CD4-positive, alpha-beta T cell (primary cell): ENCODE measurements at regions of chr2 and their contacts with region 1.

Region 1: GRCh38 chr2:226791487-226792081 is 8.0 kb downstream of the IRS1 start:
- DNase-seq: peak; percentile 83 to 96 (median 90)
- ATAC-seq: peak; percentile 95
- H3K4me3 ChIP-seq: peak overlapping the region; percentile 77
- H3K4me3 Mint-ChIP-seq: peak overlapping the region; percentile 97
- H3K27ac ChIP-seq: peak overlapping the region; percentile 88 to 91
- H3K27ac Mint-ChIP-seq: peak overlapping the region; percentile 97
- H3K4me1 ChIP-seq: peaks cover 35% of the 10 kb centered on the region
- H3K4me1 Mint-ChIP-seq: peaks cover 31% of the 10 kb centered on the region
- H3K27me3 ChIP-seq: no peaks in the 10 kb centered on the region
- H3K27me3 Mint-ChIP-seq: no peaks in the 10 kb centered on the region
- CTCF ChIP-seq: peak; percentile 40

Region 2: GRCh38 chr2:225282858-225283710 is 1508.5 kb before region 1 on chr2:
- CTCF ChIA-PET with region 1: no interaction called
- POLR2A ChIA-PET with region 1: no interaction called
- intact Hi-C with region 1: loop called in 1 of 2 experiments (anchors 10 kb)
- DNase-seq: peak in 6 of 14 experiments; percentile 2 to 51 (median 30)
- ATAC-seq: peak; percentile 43
- H3K4me3 ChIP-seq: no peak overlapping the region
- H3K4me3 Mint-ChIP-seq: no peak overlapping the region
- H3K27ac ChIP-seq: no peak overlapping the region
- H3K27ac Mint-ChIP-seq: no peak overlapping the region
- H3K4me1 ChIP-seq: no peaks in the 10 kb centered on the region
- H3K4me1 Mint-ChIP-seq: no peaks in the 10 kb centered on the region
- H3K27me3 ChIP-seq: no peaks in the 10 kb centered on the region
- H3K27me3 Mint-ChIP-seq: no peaks in the 10 kb centered on the region
- CTCF ChIP-seq: peak; percentile 82

Region 3: GRCh38 chr2:226772389-226773179 is 19.0 kb before region 1 on chr2:
- CTCF ChIA-PET with region 1: interaction called, 4 read pairs
- POLR2A ChIA-PET with region 1: interaction called, 17 read pairs
- intact Hi-C with region 1: no loop called
- DNase-seq: peak in 3 of 14 experiments; percentile 26 to 67 (median 42)
- ATAC-seq: peak; percentile 68
- H3K4me3 ChIP-seq: peak overlapping the region; percentile 3
- H3K4me3 Mint-ChIP-seq: peak overlapping the region; percentile 57
- H3K27ac ChIP-seq: no peak overlapping the region
- H3K27ac Mint-ChIP-seq: no peak overlapping the region
- H3K4me1 ChIP-seq: peaks cover 5% of the 10 kb centered on the region
- H3K4me1 Mint-ChIP-seq: peaks cover 28% of the 10 kb centered on the region
- H3K27me3 ChIP-seq: no peaks in the 10 kb centered on the region
- H3K27me3 Mint-ChIP-seq: no peaks in the 10 kb centered on the region
- CTCF ChIP-seq: no peak

Region 4: GRCh38 chr2:227324995-227325838 is 533.6 kb after region 1 on chr2 and contains the start of gene MFF:
- CTCF ChIA-PET with region 1: no interaction called
- POLR2A ChIA-PET with region 1: no interaction called
- intact Hi-C with region 1: loop called in 1 of 2 experiments (anchors 10 kb)
- DNase-seq: peak; percentile 84 to 97 (median 90)
- ATAC-seq: peak; percentile 97
- H3K4me3 ChIP-seq: peak within 1 kb of the TSS; percentile 82
- H3K4me3 Mint-ChIP-seq: peak within 1 kb of the TSS; percentile 94
- H3K27ac ChIP-seq: peak within 1 kb of the TSS; percentile 33 to 51
- H3K27ac Mint-ChIP-seq: peak within 1 kb of the TSS; percentile 92
- H3K4me1 ChIP-seq: peaks cover 22% of the 10 kb centered on the region
- H3K4me1 Mint-ChIP-seq: peaks cover 57% of the 10 kb centered on the region
- H3K27me3 ChIP-seq: no peaks in the 10 kb centered on the region
- H3K27me3 Mint-ChIP-seq: no peaks in the 10 kb centered on the region
- CTCF ChIP-seq: peak; percentile 36
- total RNA-seq, gene MFF: 46.9 to 51.8 TPM